Activated CD4-positive, alpha-beta memory T cell treated with anti-CD3 and anti-CD28 coated beads, Interleukin-2, amount 10 ng/mL, durations not matched to agents 7 days and 5 days (primary cell): ENCODE measurements at regions of chr3 and their contacts with region 1.

Region 1: GRCh38 chr3:9932843-9933560 is 632 bp upstream of the CRELD1 start:
- DNase-seq: peak; percentile 89
- H3K4me3 Mint-ChIP-seq: peak overlapping the region; percentile 96
- H3K27ac Mint-ChIP-seq: peak overlapping the region; percentile 91
- H3K4me1 Mint-ChIP-seq: peaks cover 40% of the 10 kb centered on the region
- H3K27me3 Mint-ChIP-seq: no peaks in the 10 kb centered on the region

Region 2: DNA sequence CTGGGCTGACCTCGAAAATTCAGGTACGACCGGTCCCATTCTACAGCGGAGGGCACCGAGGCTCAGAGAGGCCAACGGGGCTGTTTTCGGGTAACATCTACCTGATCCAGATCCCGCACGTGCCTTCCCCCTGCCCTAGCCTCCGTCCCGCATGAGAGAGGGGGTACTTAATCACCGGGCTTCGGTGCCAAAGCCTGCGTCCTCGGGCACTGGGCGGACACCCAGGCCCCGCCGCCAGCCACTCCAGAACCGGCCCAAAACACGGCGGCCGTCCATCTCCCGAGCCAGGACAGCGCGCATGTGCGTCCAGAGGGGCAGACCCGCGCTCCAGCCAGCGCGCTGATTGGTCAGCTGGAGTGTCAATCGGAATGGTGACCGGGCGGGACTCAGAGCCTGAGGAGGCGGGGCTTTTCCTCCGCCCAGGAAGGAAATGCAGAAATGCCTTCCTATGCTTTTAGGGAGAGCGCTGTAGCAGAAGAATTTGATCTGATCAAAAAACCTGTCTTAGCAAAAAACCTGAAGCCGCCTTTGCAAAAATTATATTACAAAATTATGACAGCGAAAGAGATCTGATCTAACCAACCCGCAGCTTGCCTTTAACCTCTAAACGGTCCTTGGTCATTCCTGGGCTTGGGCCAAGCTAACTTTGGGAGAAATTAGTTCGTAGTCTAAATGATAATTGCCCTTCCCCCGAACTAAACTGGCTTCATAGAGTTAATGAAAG is 89.1 kb before region 1 on chr3 and contains the start of gene RPUSD3:
- CTCF ChIA-PET with region 1: interaction called, 8 read pairs
- POLR2A ChIA-PET with region 1: interaction called, 18 read pairs
- DNase-seq: peak; percentile 97
- H3K4me3 Mint-ChIP-seq: peak within 1 kb of the TSS; percentile 99
- H3K27ac Mint-ChIP-seq: peak within 1 kb of the TSS; percentile 83
- H3K4me1 Mint-ChIP-seq: peaks cover 27% of the 10 kb centered on the region
- H3K27me3 Mint-ChIP-seq: no peaks in the 10 kb centered on the region
- total RNA-seq, gene RPUSD3: 51.5 to 53.6 TPM

Region 3: DNA sequence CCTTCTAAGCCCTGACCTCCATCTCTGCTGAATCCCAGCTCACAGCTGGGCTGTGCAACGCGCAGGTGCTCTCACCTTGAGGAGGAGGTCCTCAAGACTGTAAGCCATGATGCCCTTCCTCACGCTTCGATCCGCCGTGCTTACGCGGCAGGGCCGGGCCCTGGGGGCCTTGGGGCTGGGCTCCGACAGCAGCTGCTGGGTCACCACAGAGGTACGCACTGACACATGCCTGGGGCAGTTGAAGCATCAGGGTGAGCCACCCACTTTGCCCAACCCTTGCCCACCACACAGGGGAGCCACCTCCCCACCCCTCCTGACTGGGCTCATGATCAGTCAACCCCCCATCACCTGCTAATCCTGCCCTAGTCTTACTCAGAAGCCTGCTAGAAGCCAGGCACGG is 56.0 kb before region 1 on chr3:
- CTCF ChIA-PET with region 1: no interaction called
- POLR2A ChIA-PET with region 1: no interaction called
- DNase-seq: no peak
- H3K4me3 Mint-ChIP-seq: no peak overlapping the region
- H3K27ac Mint-ChIP-seq: no peak overlapping the region
- H3K4me1 Mint-ChIP-seq: no peaks in the 10 kb centered on the region
- H3K27me3 Mint-ChIP-seq: peaks cover 3% of the 10 kb centered on the region

Region 4: GRCh38 chr3:9902372-9903237 is 30.4 kb before region 1 on chr3 and contains the start of gene IL17RE:
- CTCF ChIA-PET with region 1: interaction called, 5 read pairs
- POLR2A ChIA-PET with region 1: interaction called, 13 read pairs
- DNase-seq: no peak
- H3K4me3 Mint-ChIP-seq: peak within 1 kb of the TSS; percentile 60
- H3K27ac Mint-ChIP-seq: peak within 1 kb of the TSS; percentile 75
- H3K4me1 Mint-ChIP-seq: peaks cover 35% of the 10 kb centered on the region
- H3K27me3 Mint-ChIP-seq: peaks cover 2% of the 10 kb centered on the region
- total RNA-seq, gene IL17RE: 1.7 to 3.0 TPM

Region 5: DNA sequence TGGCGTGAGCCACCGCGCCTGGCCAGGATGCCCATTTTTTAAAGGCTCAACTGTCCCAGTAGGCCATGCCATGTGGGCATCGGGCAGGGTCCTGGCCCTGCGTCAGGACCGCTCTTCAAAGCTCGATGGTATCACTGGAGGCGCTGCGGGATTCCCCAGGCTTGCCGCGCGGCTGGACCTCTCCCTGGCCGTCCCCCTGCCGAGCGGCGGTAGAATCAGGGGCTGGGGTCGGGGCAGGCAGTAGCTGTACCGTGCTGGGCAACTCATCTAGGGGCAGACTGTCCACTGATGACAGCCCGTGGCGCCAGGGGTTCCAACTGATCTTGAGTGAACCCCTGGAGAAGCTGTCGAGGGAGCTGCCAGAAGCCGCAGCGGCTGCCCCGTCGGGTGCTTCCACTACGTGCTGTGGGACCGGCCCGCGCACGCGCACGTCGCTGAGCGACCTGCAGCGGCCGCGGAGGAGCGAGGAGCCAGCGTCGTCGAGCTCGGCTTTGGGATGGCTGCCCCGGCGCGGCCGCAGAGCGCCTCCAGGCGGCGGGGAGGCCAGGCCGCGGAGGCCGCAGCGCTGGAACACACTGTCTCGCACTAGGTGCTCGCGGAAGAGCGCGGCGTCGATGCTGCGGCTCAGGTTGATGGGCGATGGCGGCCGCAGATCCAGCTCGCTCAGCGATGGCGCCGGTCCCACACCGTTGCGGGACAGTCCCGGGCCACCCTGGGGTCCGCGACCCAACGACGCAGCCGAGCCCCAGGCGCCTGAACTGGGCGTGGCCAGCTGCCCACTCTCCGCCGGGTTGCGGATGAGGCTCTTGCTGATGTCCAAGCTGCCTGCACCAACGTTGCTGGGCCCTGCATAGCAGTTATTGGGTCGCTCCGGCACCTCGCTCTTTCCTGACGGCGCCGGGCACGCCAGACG is 13.4 kb after region 1 on chr3:
- CTCF ChIA-PET with region 1: interaction called, 87 read pairs
- POLR2A ChIA-PET with region 1: interaction called, 57 read pairs
- DNase-seq: peak; percentile 85
- H3K4me3 Mint-ChIP-seq: peak overlapping the region; percentile 75
- H3K27ac Mint-ChIP-seq: peak overlapping the region; percentile 16
- H3K4me1 Mint-ChIP-seq: peaks cover 15% of the 10 kb centered on the region
- H3K27me3 Mint-ChIP-seq: no peaks in the 10 kb centered on the region

Region 6: GRCh38 chr3:9986237-9986725 is 53.3 kb after region 1 on chr3:
- CTCF ChIA-PET with region 1: interaction called, 8 read pairs
- POLR2A ChIA-PET with region 1: interaction called, 17 read pairs
- DNase-seq: no peak
- H3K4me3 Mint-ChIP-seq: peak overlapping the region; percentile 98
- H3K27ac Mint-ChIP-seq: peak overlapping the region; percentile 96
- H3K4me1 Mint-ChIP-seq: peaks cover 40% of the 10 kb centered on the region
- H3K27me3 Mint-ChIP-seq: no peaks in the 10 kb centered on the region

Region 7: DNA sequence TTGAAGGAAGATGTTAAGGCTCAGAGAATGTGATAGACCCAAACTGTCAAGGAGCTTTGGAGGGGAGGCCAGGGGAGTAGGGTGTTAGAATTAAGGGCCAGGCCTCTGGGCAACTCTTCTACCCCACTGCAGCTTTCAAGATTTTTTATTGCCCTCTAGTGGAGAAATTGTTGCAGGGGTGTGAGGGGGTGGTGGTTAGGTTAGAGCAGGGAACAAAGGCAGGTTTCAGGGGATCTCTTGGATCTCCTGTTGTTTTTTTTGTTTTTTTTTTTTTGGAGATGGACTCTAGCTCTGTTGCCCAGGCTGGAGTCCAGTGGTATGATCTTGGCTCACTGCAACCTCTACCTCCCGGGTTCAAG is 389.3 kb after region 1 on chr3:
- CTCF ChIA-PET with region 1: interaction called, 38 read pairs
- POLR2A ChIA-PET with region 1: interaction called, 16 read pairs
- DNase-seq: peak; percentile 31
- H3K4me3 Mint-ChIP-seq: no peak overlapping the region
- H3K27ac Mint-ChIP-seq: no peak overlapping the region
- H3K4me1 Mint-ChIP-seq: peaks cover 26% of the 10 kb centered on the region
- H3K27me3 Mint-ChIP-seq: peaks cover 18% of the 10 kb centered on the region